ENCODE measurements at regions of chr1 and their contacts with region 1.

Region 1: GRCh38 chr1:207321079-207321789 is at the start of gene CD55:
- DNase-seq: peak; percentile 99 to 100 (median 100)
- H3K4me3 ChIP-seq: peak within 1 kb of the TSS; percentile 98 to 99
- H3K4me3 Mint-ChIP-seq: peak within 1 kb of the TSS; percentile 94 to 99 (median 96)
- H3K27ac ChIP-seq: peak within 1 kb of the TSS; percentile 92
- H3K27ac Mint-ChIP-seq: peak within 1 kb of the TSS; percentile 98 to 100 (median 100)
- H3K4me1 ChIP-seq: peaks cover 44% of the 10 kb centered on the region
- H3K4me1 Mint-ChIP-seq: peaks cover 24 to 56% (median 35%) of the 10 kb centered on the region in 4 donors
- H3K27me3 ChIP-seq: no peaks in the 10 kb centered on the region
- H3K27me3 Mint-ChIP-seq: peaks cover 0 to 5% of the 10 kb centered on the region in 2 donors
- total RNA-seq, gene CD55: 69.0 to 77.3 TPM

Region 2: DNA sequence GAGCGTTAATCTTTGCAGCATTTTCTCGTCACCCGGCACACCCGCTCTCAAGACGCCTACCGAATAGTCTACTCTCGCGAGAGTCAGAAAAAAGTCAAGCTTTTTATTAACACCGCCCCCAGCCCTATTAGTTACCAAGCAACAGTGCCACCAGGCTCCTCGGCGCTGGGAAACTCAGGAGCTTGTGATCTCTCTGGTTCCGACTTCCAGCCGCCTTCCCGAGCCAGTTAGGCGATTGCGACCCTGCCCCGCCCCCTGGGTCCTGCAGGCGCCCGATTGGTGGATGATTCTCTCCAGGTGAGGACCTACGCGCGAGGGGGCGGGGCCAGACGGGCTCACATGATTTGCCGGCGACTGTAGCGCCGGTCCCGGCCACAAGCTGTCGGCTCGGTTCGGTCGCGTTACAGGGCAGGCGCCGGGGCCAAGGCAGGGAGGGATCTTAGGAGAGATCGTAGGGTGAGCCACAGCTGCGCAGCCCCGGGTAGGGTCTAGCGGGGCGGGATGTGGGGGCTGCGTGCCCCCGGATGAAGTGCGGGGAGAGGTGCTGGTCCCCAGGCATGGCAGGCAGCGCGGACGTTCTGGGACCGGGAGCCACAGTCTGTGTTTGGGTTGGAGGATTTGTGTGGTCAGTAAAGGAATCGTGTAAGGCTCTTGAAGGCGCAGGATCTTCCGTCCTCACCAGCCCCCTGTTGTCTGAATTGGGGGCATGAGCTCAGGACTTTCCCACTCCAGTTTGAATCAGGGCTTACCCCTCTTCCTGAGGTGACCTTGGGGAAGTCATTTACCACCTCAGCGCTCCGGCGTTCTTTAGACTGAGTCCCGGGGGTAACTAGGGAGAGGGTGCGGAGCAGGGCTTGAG is 268.1 kb before region 1 on chr1 and contains the start of gene PFKFB2:
- CTCF ChIA-PET with region 1: interaction called, 4 read pairs
- POLR2A ChIA-PET with region 1: interaction called, 11 read pairs
- intact Hi-C with region 1: no loop called
- DNase-seq: peak; percentile 93 to 96 (median 95)
- H3K4me3 ChIP-seq: peak within 1 kb of the TSS; percentile 59 to 75
- H3K4me3 Mint-ChIP-seq: peak within 1 kb of the TSS; percentile 94 to 100 (median 98)
- H3K27ac ChIP-seq: peak within 1 kb of the TSS; percentile 52
- H3K27ac Mint-ChIP-seq: peak within 1 kb of the TSS; percentile 89 to 99 (median 95)
- H3K4me1 ChIP-seq: peaks cover 33% of the 10 kb centered on the region
- H3K4me1 Mint-ChIP-seq: peaks cover 25 to 58% (median 42%) of the 10 kb centered on the region in 4 donors
- H3K27me3 ChIP-seq: no peaks in the 10 kb centered on the region
- H3K27me3 Mint-ChIP-seq: peaks cover 0 to 2% of the 10 kb centered on the region in 2 donors
- total RNA-seq, gene PFKFB2: 1.4 to 1.9 TPM

Region 3: GRCh38 chr1:207077470-207078377 is 243.5 kb before region 1 on chr1:
- CTCF ChIA-PET with region 1: no interaction called
- POLR2A ChIA-PET with region 1: no interaction called
- intact Hi-C with region 1: no loop called
- DNase-seq: peak; percentile 69 to 75 (median 72)
- H3K4me3 ChIP-seq: no peak overlapping the region
- H3K4me3 Mint-ChIP-seq: no peak overlapping the region
- H3K27ac ChIP-seq: no peak overlapping the region
- H3K27ac Mint-ChIP-seq: no peak overlapping the region
- H3K4me1 ChIP-seq: no peaks in the 10 kb centered on the region
- H3K4me1 Mint-ChIP-seq: peaks cover 0 to 2% (median under 1%) of the 10 kb centered on the region in 4 donors
- H3K27me3 ChIP-seq: no peaks in the 10 kb centered on the region
- H3K27me3 Mint-ChIP-seq: peaks cover 7 to 11% of the 10 kb centered on the region in 2 donors

Region 4: GRCh38 chr1:207288315-207288714 is 32.9 kb before region 1 on chr1:
- CTCF ChIA-PET with region 1: interaction called, 3 read pairs
- POLR2A ChIA-PET with region 1: interaction called, 29 read pairs
- intact Hi-C with region 1: no loop called
- DNase-seq: no peak
- H3K4me3 ChIP-seq: no peak overlapping the region
- H3K4me3 Mint-ChIP-seq: no peak overlapping the region
- H3K27ac ChIP-seq: no peak overlapping the region
- H3K27ac Mint-ChIP-seq: no peak overlapping the region
- H3K4me1 ChIP-seq: peaks cover 7% of the 10 kb centered on the region
- H3K4me1 Mint-ChIP-seq: peaks cover 0 to 7% (median 3%) of the 10 kb centered on the region in 4 donors
- H3K27me3 ChIP-seq: no peaks in the 10 kb centered on the region
- H3K27me3 Mint-ChIP-seq: peaks cover 6 to 9% of the 10 kb centered on the region in 2 donors

Region 5: DNA sequence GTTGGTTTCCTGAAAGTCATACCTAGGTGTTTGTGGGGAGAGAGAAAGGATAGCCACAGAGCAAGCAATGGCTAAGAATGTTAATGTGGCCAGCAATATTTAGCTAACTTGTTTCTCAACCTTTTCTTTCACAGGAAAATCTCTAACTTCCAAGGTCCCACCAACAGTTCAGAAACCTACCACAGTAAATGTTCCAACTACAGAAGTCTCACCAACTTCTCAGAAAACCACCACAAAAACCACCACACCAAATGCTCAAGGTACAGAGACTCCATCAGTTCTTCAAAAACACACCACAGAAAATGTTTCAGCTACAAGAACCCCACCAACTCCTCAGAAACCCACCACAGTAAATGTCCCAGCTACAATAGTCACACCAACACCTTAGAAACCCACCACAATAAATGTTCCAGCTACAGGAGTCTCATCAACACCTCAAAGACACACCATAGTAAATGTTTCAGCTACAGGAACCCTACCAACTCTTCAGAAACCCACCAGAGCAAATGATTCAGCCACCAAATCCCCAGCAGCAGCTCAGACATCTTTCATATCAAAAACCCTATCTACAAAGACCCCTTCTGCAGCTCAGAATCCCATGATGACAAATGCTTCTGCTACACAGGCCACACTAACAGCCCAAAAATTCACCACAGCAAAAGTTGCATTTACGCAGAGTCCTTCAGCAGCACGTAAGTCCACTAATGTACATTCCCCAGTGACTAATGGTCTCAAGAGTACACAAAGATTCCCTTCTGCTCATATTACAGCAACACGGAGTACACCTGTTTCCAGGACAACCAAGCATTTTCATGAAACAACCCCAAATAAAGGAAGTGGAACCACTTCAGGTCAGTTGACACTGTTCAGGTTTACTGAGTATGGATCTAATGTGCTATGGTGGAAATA is 15.6 kb after region 1 on chr1:
- CTCF ChIA-PET with region 1: interaction called, 10 read pairs
- POLR2A ChIA-PET with region 1: interaction called, 78 read pairs
- intact Hi-C with region 1: loop called (anchors 2 kb)
- DNase-seq: peak; percentile 20 to 39 (median 32)
- H3K4me3 ChIP-seq: no peak overlapping the region
- H3K4me3 Mint-ChIP-seq: peak overlapping the region; percentile 7 to 75 (median 52)
- H3K27ac ChIP-seq: peak overlapping the region; percentile 37
- H3K27ac Mint-ChIP-seq: peak overlapping the region; percentile 49 to 90 (median 83)
- H3K4me1 ChIP-seq: peaks cover 44% of the 10 kb centered on the region
- H3K4me1 Mint-ChIP-seq: peaks cover 43 to 67% (median 57%) of the 10 kb centered on the region in 4 donors
- H3K27me3 ChIP-seq: no peaks in the 10 kb centered on the region
- H3K27me3 Mint-ChIP-seq: no peaks in the 10 kb centered on the region

Region 6: DNA sequence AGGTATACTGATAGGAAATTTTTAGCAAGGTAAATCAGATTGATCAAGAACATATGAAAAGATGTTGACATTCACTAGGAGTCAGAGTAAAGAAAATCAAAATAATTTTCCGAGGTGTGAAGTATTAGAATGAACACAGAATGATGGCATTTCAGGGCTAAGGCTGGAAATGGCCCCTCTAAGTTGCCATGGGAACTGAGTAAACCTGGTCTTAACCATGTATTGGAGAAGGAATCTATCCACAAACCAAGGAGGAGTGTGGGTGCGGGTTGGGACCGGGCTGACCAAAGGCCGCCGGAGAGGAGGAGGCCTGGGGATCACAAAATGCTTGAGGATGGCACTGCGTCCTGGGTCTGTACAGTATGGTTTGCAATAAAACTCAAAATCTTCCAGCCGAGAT is 53.7 kb after region 1 on chr1:
- CTCF ChIA-PET with region 1: no interaction called
- POLR2A ChIA-PET with region 1: no interaction called
- intact Hi-C with region 1: loop called (anchors 10 kb)
- DNase-seq: no peak
- H3K4me3 ChIP-seq: no peak overlapping the region
- H3K4me3 Mint-ChIP-seq: no peak overlapping the region
- H3K27ac ChIP-seq: no peak overlapping the region
- H3K27ac Mint-ChIP-seq: no peak overlapping the region
- H3K4me1 ChIP-seq: no peaks in the 10 kb centered on the region
- H3K4me1 Mint-ChIP-seq: no peaks in the 10 kb centered on the region
- H3K27me3 ChIP-seq: no peaks in the 10 kb centered on the region
- H3K27me3 Mint-ChIP-seq: no peaks in the 10 kb centered on the region

Measured in CD4-positive, alpha-beta memory T cell (primary cell).